ENCODE measurements at regions of chr1 and their contacts with region 1.

Region 1: GRCh38 chr1:111507411-111508201 is 4.2 kb upstream of the ADORA3 start:
- DNase-seq: peak; percentile 55
- ATAC-seq: peak; percentile 81
- H3K4me3 ChIP-seq: no peak overlapping the region
- H3K27ac ChIP-seq: peak overlapping the region; percentile 86
- H3K4me1 ChIP-seq: peaks cover 10% of the 10 kb centered on the region
- H3K27me3 ChIP-seq: peaks cover 8% of the 10 kb centered on the region
- CTCF ChIP-seq: 0 out of 2 replicates have a peak, but pooled peaks have one; percentile 4
- POLR2A ChIP-seq: no peak
- RAD21 ChIP-seq: no peak

Region 2: GRCh38 chr1:111110197-111110899 is 397.3 kb before region 1 on chr1:
- CTCF ChIA-PET with region 1: no interaction called
- POLR2A ChIA-PET with region 1: no interaction called
- dilution Hi-C with region 1: no loop called
- in situ Hi-C with region 1: no loop called
- intact Hi-C with region 1: no loop called
- DNase-seq: peak; percentile 41
- ATAC-seq: peak; percentile 46
- H3K4me3 ChIP-seq: no peak overlapping the region
- H3K27ac ChIP-seq: no peak overlapping the region
- H3K4me1 ChIP-seq: no peaks in the 10 kb centered on the region
- H3K27me3 ChIP-seq: no peaks in the 10 kb centered on the region
- CTCF ChIP-seq: no peak
- POLR2A ChIP-seq: no peak
- RAD21 ChIP-seq: no peak

Region 3: DNA sequence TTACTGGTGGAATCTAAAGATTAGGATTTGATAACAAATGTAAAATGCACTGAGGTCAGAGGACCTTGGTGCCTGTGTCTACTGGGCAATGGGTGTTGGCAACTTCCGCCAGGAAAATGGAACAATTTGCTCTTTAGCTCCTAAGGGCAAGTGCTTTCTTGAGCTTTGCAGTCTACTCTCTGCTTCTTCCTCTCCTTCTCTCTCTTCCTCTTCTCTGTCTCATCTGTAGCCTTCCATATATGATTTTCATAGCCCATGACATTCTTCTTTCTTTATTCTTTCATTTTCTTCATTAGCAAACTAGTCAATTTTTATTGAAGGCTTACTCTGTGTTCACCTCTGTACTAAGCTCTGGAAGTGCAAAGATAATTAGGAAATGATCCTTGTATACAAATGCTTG is 115.6 kb before region 1 on chr1:
- CTCF ChIA-PET with region 1: no interaction called
- POLR2A ChIA-PET with region 1: no interaction called
- dilution Hi-C with region 1: no loop called
- in situ Hi-C with region 1: no loop called
- intact Hi-C with region 1: no loop called
- DNase-seq: no peak
- ATAC-seq: no peak
- H3K4me3 ChIP-seq: no peak overlapping the region
- H3K27ac ChIP-seq: no peak overlapping the region
- H3K4me1 ChIP-seq: no peaks in the 10 kb centered on the region
- H3K27me3 ChIP-seq: peaks cover 29% of the 10 kb centered on the region
- CTCF ChIP-seq: no peak
- POLR2A ChIP-seq: no peak
- RAD21 ChIP-seq: no peak

Region 4: GRCh38 chr1:111481387-111482221 is 26.0 kb before region 1 on chr1:
- CTCF ChIA-PET with region 1: interaction called, 6 read pairs
- POLR2A ChIA-PET with region 1: no interaction called
- dilution Hi-C with region 1: no loop called
- in situ Hi-C with region 1: no loop called
- intact Hi-C with region 1: loop called (anchors 1 kb)
- DNase-seq: peak; percentile 66
- ATAC-seq: peak; percentile 99
- H3K4me3 ChIP-seq: no peak overlapping the region
- H3K27ac ChIP-seq: no peak overlapping the region
- H3K4me1 ChIP-seq: no peaks in the 10 kb centered on the region
- H3K27me3 ChIP-seq: no peaks in the 10 kb centered on the region
- CTCF ChIP-seq: peak; percentile 92
- POLR2A ChIP-seq: peak; percentile 28; the same call in 1 of the 2 replicates
- RAD21 ChIP-seq: peak; percentile 95

Region 5: DNA sequence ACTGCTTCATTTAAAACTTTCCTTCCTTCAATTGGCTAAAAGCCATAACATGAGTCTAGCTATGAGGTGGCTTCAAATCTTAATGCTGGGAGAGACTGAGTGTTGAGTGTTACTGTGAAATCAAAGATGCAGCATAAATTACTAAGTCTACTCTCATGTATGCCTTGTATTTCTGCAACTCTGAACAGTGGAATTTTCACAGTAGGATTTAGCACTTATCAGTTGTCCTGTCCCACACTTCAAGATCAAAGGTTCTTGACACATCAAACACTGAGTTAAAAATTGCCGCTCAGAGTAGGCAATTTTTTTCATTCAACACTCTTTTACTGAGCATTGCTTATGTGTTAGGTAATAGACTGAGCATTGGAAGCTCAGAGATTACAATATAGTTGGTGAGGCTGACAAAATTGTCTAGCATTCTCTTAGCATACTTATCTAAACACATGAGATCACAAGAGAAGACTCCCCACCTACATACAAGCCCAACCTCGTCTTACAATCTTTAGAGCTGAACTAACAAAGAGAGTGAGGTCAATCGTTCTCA is 52.2 kb after region 1 on chr1:
- CTCF ChIA-PET with region 1: interaction called, 3 read pairs
- POLR2A ChIA-PET with region 1: no interaction called
- dilution Hi-C with region 1: no loop called
- in situ Hi-C with region 1: loop called (anchors 5 kb)
- intact Hi-C with region 1: no loop called
- DNase-seq: peak; percentile 91
- ATAC-seq: peak; percentile 80
- H3K4me3 ChIP-seq: no peak overlapping the region
- H3K27ac ChIP-seq: no peak overlapping the region
- H3K4me1 ChIP-seq: peaks cover 7% of the 10 kb centered on the region
- H3K27me3 ChIP-seq: no peaks in the 10 kb centered on the region
- CTCF ChIP-seq: no peak
- POLR2A ChIP-seq: no peak
- RAD21 ChIP-seq: no peak

Region 6: DNA sequence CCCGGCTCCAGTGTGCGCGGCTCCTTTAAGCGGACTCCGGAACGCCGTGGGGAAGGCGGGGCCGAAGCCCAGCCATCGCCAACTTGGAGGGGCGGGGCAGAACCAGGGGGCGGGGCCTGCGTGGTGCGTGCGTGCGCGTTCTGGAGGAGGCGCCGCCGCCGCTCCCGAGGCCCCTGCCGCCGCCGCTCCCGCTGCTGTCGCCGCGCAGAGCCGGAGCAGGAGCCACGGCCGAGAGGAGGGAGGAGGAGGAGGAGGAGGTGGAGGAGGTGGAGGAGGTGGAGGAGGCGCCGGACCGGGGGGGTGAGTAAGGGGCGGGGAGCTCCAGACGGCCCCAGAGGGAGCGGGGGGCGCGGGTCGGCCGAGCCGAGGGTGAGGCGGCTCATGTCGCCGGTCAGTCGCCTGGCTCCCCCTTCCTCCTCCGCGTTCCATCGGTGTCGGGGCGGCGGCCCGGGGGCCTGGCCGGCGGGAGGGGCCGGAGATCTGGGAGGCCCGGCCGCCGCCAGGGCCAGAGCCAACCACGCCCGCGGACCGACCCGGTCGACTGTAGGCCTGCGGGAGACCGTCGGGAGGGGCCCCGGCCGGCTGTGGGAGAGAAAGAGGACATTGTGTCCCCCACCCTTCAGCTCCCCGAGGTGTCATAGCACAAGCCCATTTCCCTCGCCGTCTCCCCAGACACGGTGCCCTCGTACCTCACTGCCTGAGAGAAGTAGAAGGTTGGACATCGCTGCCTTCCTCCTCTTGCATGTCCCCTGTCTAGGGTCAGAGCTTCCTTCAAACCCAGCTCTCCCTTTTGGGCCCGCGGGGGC is 112.2 kb after region 1 on chr1 and contains the start of gene RAP1A:
- CTCF ChIA-PET with region 1: interaction called, 4 read pairs
- POLR2A ChIA-PET with region 1: interaction called, 11 read pairs
- dilution Hi-C with region 1: no loop called
- in situ Hi-C with region 1: no loop called
- intact Hi-C with region 1: loop called (anchors 1 kb)
- DNase-seq: peak; percentile 88
- ATAC-seq: peak; percentile 96
- H3K4me3 ChIP-seq: peak within 1 kb of the TSS; percentile 99
- H3K27ac ChIP-seq: peak within 1 kb of the TSS; percentile 90
- H3K4me1 ChIP-seq: peaks cover 7% of the 10 kb centered on the region; the same call in 1 of the 2 replicates
- H3K27me3 ChIP-seq: no peaks in the 10 kb centered on the region
- CTCF ChIP-seq: no peak
- POLR2A ChIP-seq: peak; percentile 56; the same call in 1 of the 2 replicates
- RAD21 ChIP-seq: no peak
- total RNA-seq, gene RAP1A: 18.1 and 35.3 TPM in 2 replicates

Region 7: GRCh38 chr1:111656086-111657017 is 148.7 kb after region 1 on chr1:
- CTCF ChIA-PET with region 1: interaction called, 11 read pairs
- POLR2A ChIA-PET with region 1: no interaction called
- dilution Hi-C with region 1: no loop called
- in situ Hi-C with region 1: no loop called
- intact Hi-C with region 1: loop called (anchors 1 kb)
- DNase-seq: peak; percentile 66
- ATAC-seq: peak; percentile 72
- H3K4me3 ChIP-seq: no peak overlapping the region
- H3K27ac ChIP-seq: no peak overlapping the region
- H3K4me1 ChIP-seq: peaks cover 8% of the 10 kb centered on the region
- H3K27me3 ChIP-seq: no peaks in the 10 kb centered on the region
- CTCF ChIP-seq: peak; percentile 72
- POLR2A ChIP-seq: 0 out of 2 replicates have a peak, but pooled peaks have one; percentile 19
- RAD21 ChIP-seq: peak; percentile 86

Region 8: GRCh38 chr1:111706921-111707320 is 199.3 kb after region 1 on chr1:
- CTCF ChIA-PET with region 1: interaction called, 9 read pairs
- POLR2A ChIA-PET with region 1: no interaction called
- dilution Hi-C with region 1: no loop called
- in situ Hi-C with region 1: no loop called
- intact Hi-C with region 1: loop called (anchors 1 kb)
- DNase-seq: peak; percentile 50
- ATAC-seq: 0 out of 2 replicates have a peak, but pooled peaks have one; percentile 9
- H3K4me3 ChIP-seq: no peak overlapping the region
- H3K27ac ChIP-seq: no peak overlapping the region; the same call in 1 of the 2 replicates
- H3K4me1 ChIP-seq: peaks cover 10% of the 10 kb centered on the region
- H3K27me3 ChIP-seq: no peaks in the 10 kb centered on the region
- CTCF ChIP-seq: no peak
- POLR2A ChIP-seq: no peak
- RAD21 ChIP-seq: no peak

Region 9: DNA sequence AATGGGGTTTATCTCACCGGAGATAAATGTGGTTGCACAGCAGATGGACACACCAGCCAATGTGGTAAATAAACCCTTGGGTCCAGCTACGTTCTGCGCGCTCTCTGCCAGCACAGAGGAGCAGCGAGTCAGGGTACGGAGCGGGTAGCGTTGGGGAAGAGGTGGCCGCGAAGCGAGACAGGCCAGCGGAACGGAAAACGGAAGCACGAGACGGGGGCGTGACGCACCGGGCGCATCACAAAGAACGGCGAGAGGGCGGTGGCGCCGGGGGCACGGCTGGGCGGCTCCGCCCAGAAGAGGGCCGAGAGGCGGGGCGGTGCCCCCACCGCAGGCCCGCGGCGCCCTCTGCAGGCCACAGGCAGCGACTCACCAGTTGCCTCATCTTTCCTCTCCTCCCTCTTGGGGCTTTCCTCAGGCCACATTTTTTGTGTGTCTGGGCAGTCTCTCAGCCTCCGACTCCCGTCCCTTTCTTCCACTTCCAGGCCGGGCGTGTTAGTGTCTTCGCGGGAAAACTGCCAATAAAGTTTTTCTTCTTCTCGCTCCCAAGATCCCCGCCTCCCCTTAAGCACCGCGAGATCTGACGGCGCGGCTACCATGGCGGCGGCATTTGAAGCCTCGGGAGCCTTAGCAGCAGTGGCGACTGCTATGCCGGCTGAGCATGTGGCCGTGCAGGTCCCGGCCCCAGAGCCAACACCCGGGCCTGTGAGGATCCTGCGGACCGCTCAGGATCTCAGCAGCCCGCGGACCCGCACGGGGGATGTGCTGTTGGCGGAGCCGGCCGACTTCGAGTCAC is 247.9 kb after region 1 on chr1 and contains the start of gene DDX20:
- CTCF ChIA-PET with region 1: interaction called, 5 read pairs
- POLR2A ChIA-PET with region 1: no interaction called
- dilution Hi-C with region 1: no loop called
- in situ Hi-C with region 1: no loop called
- intact Hi-C with region 1: loop called (anchors 1 kb)
- DNase-seq: peak; percentile 98
- ATAC-seq: peak; percentile 96
- H3K4me3 ChIP-seq: peak within 1 kb of the TSS; percentile 85
- H3K27ac ChIP-seq: peak within 1 kb of the TSS; percentile 94
- H3K4me1 ChIP-seq: peaks cover 4% of the 10 kb centered on the region
- H3K27me3 ChIP-seq: no peaks in the 10 kb centered on the region
- CTCF ChIP-seq: peak; percentile 97
- POLR2A ChIP-seq: peak; percentile 87; the same call in 1 of the 2 replicates
- RAD21 ChIP-seq: peak; percentile 86
- total RNA-seq, gene DDX20: 10.9 and 14.2 TPM in 2 replicates

Measured in IMR-90 (cell line).